ENCODE measurements at regions of chrX and their contacts with region 1.

Region 1: GRCh38 chrX:54639346-54640102 is 109.5 kb downstream of the GNL3L start:
- DNase-seq: peak; percentile 79
- ATAC-seq: peak; percentile 97
- H3K4me3 ChIP-seq: peak overlapping the region; percentile 49; the same call in 1 of the 2 replicates
- H3K27ac ChIP-seq: peak overlapping the region; percentile 86
- H3K4me1 ChIP-seq: no peaks in the 10 kb centered on the region
- H3K27me3 ChIP-seq: no peaks in the 10 kb centered on the region
- CTCF ChIP-seq: peak; percentile 51 to 65 (median 60)
- EP300 ChIP-seq: no peak
- POLR2A ChIP-seq: peak; percentile 80
- RAD21 ChIP-seq: peak; percentile 40

Region 2: DNA sequence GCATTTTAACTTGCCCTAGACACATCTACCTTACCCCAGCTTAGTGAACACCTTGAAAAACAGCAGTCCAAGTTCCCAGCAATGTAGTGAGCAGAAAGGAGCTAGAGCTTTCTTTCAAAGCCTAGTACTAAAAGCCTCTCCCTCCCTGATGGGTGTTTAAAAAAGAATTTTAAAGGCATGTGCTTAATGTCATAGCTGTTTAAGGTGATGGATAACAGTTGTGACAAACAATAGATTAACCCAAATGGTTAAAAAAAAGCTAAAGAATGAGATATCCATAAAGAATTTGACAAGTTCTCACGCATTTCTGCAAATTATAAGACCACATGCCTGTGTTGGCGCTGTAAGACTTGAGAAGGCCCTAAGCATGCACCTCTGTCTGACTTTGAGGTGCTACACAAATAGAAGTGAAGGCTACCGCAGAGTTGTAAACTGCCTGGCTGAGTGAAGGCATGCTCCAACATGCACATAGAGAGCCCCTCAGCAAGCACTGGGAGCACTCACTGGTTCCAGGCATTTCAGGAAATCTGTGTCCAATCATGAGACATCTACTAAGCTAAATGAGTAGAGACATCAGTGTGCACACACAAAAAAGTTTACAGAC is 689.3 kb before region 1 on chrX:
- CTCF ChIA-PET with region 1: no interaction called
- POLR2A ChIA-PET with region 1: no interaction called
- RAD21 ChIA-PET with region 1: no interaction called
- SMC1A ChIA-PET with region 1: no interaction called
- in situ Hi-C with region 1: no loop called
- intact Hi-C with region 1: no loop called
- DNase-seq: no peak
- ATAC-seq: no peak
- H3K4me3 ChIP-seq: no peak overlapping the region
- H3K27ac ChIP-seq: no peak overlapping the region
- H3K4me1 ChIP-seq: no peaks in the 10 kb centered on the region
- H3K27me3 ChIP-seq: no peaks in the 10 kb centered on the region
- CTCF ChIP-seq: no peak
- EP300 ChIP-seq: no peak
- POLR2A ChIP-seq: no peak
- RAD21 ChIP-seq: no peak

Region 3: GRCh38 chrX:54044126-54044876 is 595.2 kb before region 1 on chrX and contains the start of gene PHF8:
- CTCF ChIA-PET with region 1: interaction called, 3 read pairs
- POLR2A ChIA-PET with region 1: interaction called, 7 read pairs
- RAD21 ChIA-PET with region 1: interaction called, 10 read pairs
- SMC1A ChIA-PET with region 1: interaction called, 4 read pairs
- in situ Hi-C with region 1: no loop called
- intact Hi-C with region 1: loop called (anchors 5 kb)
- DNase-seq: peak; percentile 77
- ATAC-seq: peak; percentile 91
- H3K4me3 ChIP-seq: peak within 1 kb of the TSS; percentile 80
- H3K27ac ChIP-seq: peak within 1 kb of the TSS; percentile 83
- H3K4me1 ChIP-seq: peaks cover 4% of the 10 kb centered on the region; the same call in 1 of the 2 replicates
- H3K27me3 ChIP-seq: no peaks in the 10 kb centered on the region
- CTCF ChIP-seq: no peak
- EP300 ChIP-seq: no peak
- POLR2A ChIP-seq: peak; percentile 58
- RAD21 ChIP-seq: no peak
- polyA plus RNA-seq, gene PHF8: 2.4 TPM

Region 4: GRCh38 chrX:54529552-54530357 is 109.8 kb before region 1 on chrX and contains the start of gene GNL3L:
- CTCF ChIA-PET with region 1: no interaction called
- POLR2A ChIA-PET with region 1: no interaction called
- RAD21 ChIA-PET with region 1: interaction called, 11 read pairs
- SMC1A ChIA-PET with region 1: interaction called, 5 read pairs
- in situ Hi-C with region 1: no loop called
- intact Hi-C with region 1: no loop called
- DNase-seq: peak; percentile 49
- ATAC-seq: peak; percentile 90
- H3K4me3 ChIP-seq: peak within 1 kb of the TSS; percentile 84
- H3K27ac ChIP-seq: peak within 1 kb of the TSS; percentile 81
- H3K4me1 ChIP-seq: no peaks in the 10 kb centered on the region
- H3K27me3 ChIP-seq: no peaks in the 10 kb centered on the region
- CTCF ChIP-seq: no peak
- EP300 ChIP-seq: no peak
- POLR2A ChIP-seq: peak; percentile 82
- RAD21 ChIP-seq: no peak
- polyA plus RNA-seq, gene GNL3L: 5.8 to 14.7 TPM

Region 5: GRCh38 chrX:54786962-54787361 is 147.4 kb after region 1 on chrX:
- CTCF ChIA-PET with region 1: interaction called, 18 read pairs
- POLR2A ChIA-PET with region 1: no interaction called
- RAD21 ChIA-PET with region 1: interaction called, 9 read pairs
- SMC1A ChIA-PET with region 1: interaction called, 4 read pairs
- in situ Hi-C with region 1: no loop called
- intact Hi-C with region 1: loop called (anchors 1 kb)
- DNase-seq: no peak
- ATAC-seq: peak; percentile 89
- H3K4me3 ChIP-seq: no peak overlapping the region
- H3K27ac ChIP-seq: no peak overlapping the region
- H3K4me1 ChIP-seq: no peaks in the 10 kb centered on the region
- H3K27me3 ChIP-seq: no peaks in the 10 kb centered on the region; a peak in 1 of 4 replicates
- CTCF ChIP-seq: peak; percentile 20 to 42 (median 33); a peak in 3 of 6 replicates
- EP300 ChIP-seq: no peak
- POLR2A ChIP-seq: no peak
- RAD21 ChIP-seq: peak; percentile 43

Region 6: DNA sequence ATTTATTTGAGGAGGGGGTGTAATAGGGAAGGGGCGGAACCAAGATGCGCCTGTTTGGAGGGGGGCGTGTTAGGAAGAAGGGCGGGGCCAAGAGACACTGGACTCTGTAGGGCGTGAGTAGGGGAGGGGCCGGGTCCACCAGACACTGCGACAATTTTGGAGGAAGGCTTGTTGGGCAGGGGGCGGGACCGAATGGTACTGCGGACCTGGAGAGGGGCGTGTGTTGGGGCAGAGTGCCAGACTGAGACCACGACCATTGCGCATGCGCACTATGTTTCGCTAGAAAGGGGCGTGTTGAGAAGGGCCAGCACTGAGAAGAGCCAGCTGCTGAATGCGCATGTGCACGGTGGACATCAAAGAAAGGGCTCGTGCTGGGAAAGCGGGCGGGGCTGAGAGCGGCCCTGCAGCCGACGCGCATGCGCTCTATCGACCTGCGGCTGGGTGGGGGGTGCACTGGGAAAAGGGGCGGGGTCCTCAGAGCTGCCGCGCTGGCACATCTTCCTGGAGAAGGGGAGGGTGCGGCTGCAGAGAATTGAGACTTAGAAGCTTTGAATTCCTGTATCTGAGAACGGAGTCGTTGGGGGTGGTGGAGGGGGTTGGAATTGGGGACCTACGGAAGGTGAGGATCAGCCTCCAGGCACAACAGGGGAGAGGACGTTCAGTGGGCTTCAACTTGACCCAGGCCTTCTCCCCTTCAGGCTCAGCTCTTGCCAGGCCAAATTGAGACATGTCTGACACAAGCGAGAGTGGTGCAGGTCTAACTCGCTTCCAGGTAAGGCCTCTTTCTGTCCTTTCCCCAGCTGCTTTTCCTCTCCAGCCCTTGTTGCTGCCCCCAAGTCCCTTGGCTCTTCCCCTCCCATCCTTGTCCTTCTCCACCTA is 169.3 kb after region 1 on chrX:
- CTCF ChIA-PET with region 1: interaction called, 4 read pairs
- POLR2A ChIA-PET with region 1: interaction called, 3 read pairs
- RAD21 ChIA-PET with region 1: interaction called, 14 read pairs
- SMC1A ChIA-PET with region 1: no interaction called
- in situ Hi-C with region 1: loop called (anchors 5 kb)
- intact Hi-C with region 1: no loop called
- DNase-seq: peak; percentile 92
- ATAC-seq: peak; percentile 96
- H3K4me3 ChIP-seq: peak overlapping the region; percentile 72
- H3K27ac ChIP-seq: peak overlapping the region; percentile 50
- H3K4me1 ChIP-seq: no peaks in the 10 kb centered on the region
- H3K27me3 ChIP-seq: no peaks in the 10 kb centered on the region
- CTCF ChIP-seq: no peak
- EP300 ChIP-seq: no peak
- POLR2A ChIP-seq: 0 out of 2 replicates have a peak, but pooled peaks have one; percentile 59
- RAD21 ChIP-seq: no peak

Region 7: GRCh38 chrX:54999717-55000598 is 360.4 kb after region 1 on chrX and contains the start of gene APEX2:
- CTCF ChIA-PET with region 1: no interaction called
- POLR2A ChIA-PET with region 1: interaction called, 6 read pairs
- RAD21 ChIA-PET with region 1: interaction called, 7 read pairs
- SMC1A ChIA-PET with region 1: interaction called, 3 read pairs
- in situ Hi-C with region 1: loop called (anchors 10 kb)
- intact Hi-C with region 1: no loop called
- DNase-seq: peak; percentile 61
- ATAC-seq: peak; percentile 95
- H3K4me3 ChIP-seq: peak within 1 kb of the TSS; percentile 59
- H3K27ac ChIP-seq: peak within 1 kb of the TSS; percentile 95
- H3K4me1 ChIP-seq: no peaks in the 10 kb centered on the region; the same call in 1 of the 2 replicates
- H3K27me3 ChIP-seq: no peaks in the 10 kb centered on the region
- CTCF ChIP-seq: no peak
- EP300 ChIP-seq: no peak
- POLR2A ChIP-seq: peak; percentile 87
- RAD21 ChIP-seq: no peak
- polyA plus RNA-seq, gene APEX2: 18.9 to 20.4 TPM

Region 8: DNA sequence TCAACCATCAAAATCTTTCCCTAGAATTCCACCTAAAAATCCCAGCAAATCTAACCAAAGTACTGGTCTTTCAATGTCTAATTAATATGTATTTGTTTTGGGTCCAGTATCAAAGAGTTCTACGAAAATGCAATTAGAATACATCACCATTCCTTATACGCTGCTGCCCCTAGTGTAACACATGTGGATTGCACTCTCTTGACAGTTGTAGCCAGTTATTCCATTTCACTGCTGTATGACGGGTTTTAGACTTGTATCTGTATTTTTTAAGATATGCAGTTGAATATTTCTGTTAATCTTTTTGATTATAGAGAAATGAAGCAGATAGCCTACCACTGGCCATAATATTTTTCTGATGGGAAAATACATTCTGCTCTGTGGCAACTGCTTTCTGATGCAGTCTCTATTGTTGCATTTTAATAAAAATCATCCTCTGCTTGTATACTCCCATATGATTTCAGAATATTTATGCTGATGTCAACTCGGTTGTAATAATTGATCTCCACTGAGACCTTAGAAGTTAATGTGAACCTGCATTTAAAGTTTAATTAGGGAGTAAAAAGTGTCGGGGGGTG is 418.2 kb after region 1 on chrX:
- CTCF ChIA-PET with region 1: interaction called, 4 read pairs
- POLR2A ChIA-PET with region 1: no interaction called
- RAD21 ChIA-PET with region 1: interaction called, 5 read pairs
- SMC1A ChIA-PET with region 1: interaction called, 5 read pairs
- in situ Hi-C with region 1: no loop called
- intact Hi-C with region 1: loop called (anchors 5 kb)
- DNase-seq: no peak
- ATAC-seq: peak; percentile 83
- H3K4me3 ChIP-seq: no peak overlapping the region
- H3K27ac ChIP-seq: no peak overlapping the region
- H3K4me1 ChIP-seq: no peaks in the 10 kb centered on the region
- H3K27me3 ChIP-seq: no peaks in the 10 kb centered on the region
- CTCF ChIP-seq: peak; percentile 76 to 84 (median 76)
- EP300 ChIP-seq: no peak
- POLR2A ChIP-seq: no peak
- RAD21 ChIP-seq: peak; percentile 84

Measured in GM12878 (cell line).